ENCODE measurements at regions of chr1 and their contacts with region 1.

Region 1: GRCh38 chr1:77533660-77534305 is 148.7 kb downstream of the ZZZ3 start:
- DNase-seq: peak in 1 of 2 donors; percentile 25
- H3K4me3 ChIP-seq: no peak overlapping the region
- CTCF ChIP-seq: no peak
- POLR2A ChIP-seq: no peak

Region 2: GRCh38 chr1:76238094-76238628 is 1295.6 kb before region 1 on chr1:
- intact Hi-C with region 1: no loop called
- DNase-seq: no peak
- H3K4me3 ChIP-seq: no peak overlapping the region
- CTCF ChIP-seq: no peak
- POLR2A ChIP-seq: no peak

Region 3: DNA sequence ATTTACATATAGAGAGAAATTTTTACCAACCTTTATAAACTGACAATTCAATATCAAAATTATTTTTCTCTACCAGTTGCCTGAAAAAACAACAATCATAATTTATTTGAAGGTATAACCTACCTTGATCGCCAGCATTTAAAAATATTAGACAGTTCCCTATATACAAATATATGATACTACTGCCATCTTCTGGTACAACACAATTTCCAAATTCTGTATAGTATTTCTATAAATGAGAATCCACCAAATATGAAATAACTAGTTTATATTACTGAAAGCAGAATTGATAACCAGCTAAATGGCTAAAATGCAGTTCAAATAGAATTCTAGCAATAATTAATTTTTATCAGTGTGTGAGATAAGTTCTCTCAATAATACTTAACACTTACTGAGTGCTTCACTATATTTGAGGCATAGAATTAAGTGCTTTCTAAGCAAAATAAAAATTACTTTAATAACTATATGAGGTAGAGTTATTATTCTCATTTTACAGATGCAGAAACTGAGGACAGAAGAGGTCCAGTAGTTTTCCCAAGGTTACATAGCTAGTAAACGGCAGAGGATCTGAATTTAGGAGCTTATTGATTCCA is 390.2 kb before region 1 on chr1:
- intact Hi-C with region 1: loop called (anchors 10 kb)
- DNase-seq: no peak
- H3K4me3 ChIP-seq: no peak overlapping the region
- CTCF ChIP-seq: no peak
- POLR2A ChIP-seq: no peak